Activated naive CD4-positive, alpha-beta T cell treated with anti-CD3 and anti-CD28 coated beads for 36 hours (primary cell): ENCODE measurements at regions of chr21 and their contacts with region 1.

Region 1: DNA sequence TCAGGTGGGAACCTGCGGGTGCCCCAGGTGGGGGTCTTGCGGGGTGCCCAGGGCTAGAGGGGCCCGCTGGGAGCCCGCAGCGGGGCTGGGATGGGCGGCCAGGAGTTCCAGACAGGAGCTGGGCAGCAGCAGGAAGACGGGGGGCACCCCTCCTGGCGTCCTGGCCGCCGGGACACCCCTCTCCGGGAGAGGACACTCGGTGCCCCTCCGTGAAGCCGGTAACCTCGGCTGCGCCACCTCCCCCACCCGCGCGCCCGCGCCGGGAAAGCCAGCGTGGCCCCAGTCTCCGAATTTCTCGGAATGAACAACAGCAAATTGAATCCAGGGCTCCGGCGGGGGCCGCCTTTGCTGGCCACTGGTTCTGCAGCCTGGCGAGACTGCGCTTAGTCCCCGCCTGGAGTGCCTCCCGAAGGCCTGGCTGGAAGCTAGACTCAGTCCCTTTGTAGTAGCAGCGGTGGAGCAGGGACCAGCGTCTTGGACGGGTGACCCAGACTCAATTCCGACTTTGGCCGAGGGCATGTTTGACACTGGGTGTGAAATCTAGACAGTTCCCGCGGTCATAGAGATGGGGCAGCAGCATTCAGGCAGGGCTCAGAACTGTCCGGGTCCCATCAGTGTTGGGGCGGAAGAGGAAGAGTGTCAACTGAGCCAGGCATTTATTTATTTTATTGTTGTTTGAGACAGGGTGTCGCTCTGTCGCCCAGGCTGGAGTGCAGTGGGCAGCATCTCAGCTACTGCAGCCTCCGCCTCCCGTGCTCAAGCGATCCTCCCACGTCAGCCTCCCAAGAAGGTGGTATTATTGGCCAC is 769 bp downstream of the IFNGR2 start:
- DNase-seq: peak; percentile 53
- H3K4me3 Mint-ChIP-seq: peak overlapping the region; percentile 84
- H3K27ac Mint-ChIP-seq: peak overlapping the region; percentile 84
- H3K4me1 Mint-ChIP-seq: peaks cover 38% of the 10 kb centered on the region
- H3K27me3 Mint-ChIP-seq: peaks cover 2% of the 10 kb centered on the region

Region 2: DNA sequence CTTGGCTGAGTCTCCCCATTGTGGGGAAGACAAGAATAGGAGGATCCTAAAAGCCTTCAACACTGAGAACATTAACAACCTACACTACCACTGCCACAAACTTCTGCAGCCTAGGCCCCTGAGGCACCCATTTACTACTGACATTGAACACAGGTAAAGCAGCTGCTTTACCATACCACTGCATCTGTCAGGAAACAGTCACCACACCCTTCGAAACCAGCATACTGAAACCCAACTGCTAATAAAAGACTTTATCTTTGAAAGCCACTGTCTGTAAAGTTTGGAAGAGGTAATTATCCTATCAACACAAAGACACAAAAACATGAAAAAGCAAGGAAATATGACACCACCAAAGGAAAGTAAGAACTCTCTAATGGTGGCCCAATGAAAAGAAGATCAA is 71.8 kb before region 1 on chr21:
- CTCF ChIA-PET with region 1: no interaction called
- intact Hi-C with region 1: no loop called
- DNase-seq: peak; percentile 23
- H3K4me3 Mint-ChIP-seq: no peak overlapping the region
- H3K27ac Mint-ChIP-seq: peak overlapping the region; percentile 32
- H3K4me1 Mint-ChIP-seq: peaks cover 66% of the 10 kb centered on the region
- H3K27me3 Mint-ChIP-seq: no peaks in the 10 kb centered on the region

Region 3: GRCh38 chr21:33374450-33375096 is 29.4 kb before region 1 on chr21:
- CTCF ChIA-PET with region 1: no interaction called
- intact Hi-C with region 1: no loop called
- DNase-seq: peak; percentile 81
- H3K4me3 Mint-ChIP-seq: no peak overlapping the region
- H3K27ac Mint-ChIP-seq: no peak overlapping the region
- H3K4me1 Mint-ChIP-seq: peaks cover 13% of the 10 kb centered on the region
- H3K27me3 Mint-ChIP-seq: no peaks in the 10 kb centered on the region

Region 4: DNA sequence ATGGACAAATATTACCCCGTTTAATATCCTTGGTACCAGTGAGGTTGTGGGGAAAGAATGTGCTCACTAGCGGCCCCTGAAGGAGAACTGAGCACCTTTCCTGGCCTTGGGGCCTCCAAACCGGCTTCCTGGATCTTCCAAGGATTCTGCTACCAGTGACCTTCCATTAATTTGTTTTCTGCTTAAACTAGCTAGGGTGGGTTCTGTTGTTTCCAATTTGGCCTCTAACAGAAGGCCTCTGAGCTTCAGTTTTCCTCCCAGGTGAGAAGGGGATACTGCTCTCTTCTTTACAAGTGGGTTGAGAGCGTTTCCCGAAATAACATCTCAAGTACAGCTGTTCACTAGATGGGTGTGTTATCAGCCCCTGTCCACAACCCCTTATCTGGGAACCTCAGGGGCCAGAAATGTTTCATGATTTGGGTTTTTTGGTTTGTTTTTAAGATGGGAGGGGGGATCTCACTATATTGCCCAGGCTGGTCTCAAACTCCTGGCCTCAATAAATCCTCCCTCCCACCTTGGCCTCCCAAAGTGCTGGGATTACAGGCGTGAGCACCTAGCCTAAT is 17.7 kb before region 1 on chr21:
- CTCF ChIA-PET with region 1: interaction called, 11 read pairs
- intact Hi-C with region 1: loop called (anchors 1 kb)
- DNase-seq: no peak
- H3K4me3 Mint-ChIP-seq: no peak overlapping the region
- H3K27ac Mint-ChIP-seq: no peak overlapping the region
- H3K4me1 Mint-ChIP-seq: peaks cover 43% of the 10 kb centered on the region
- H3K27me3 Mint-ChIP-seq: peaks cover 5% of the 10 kb centered on the region

Region 5: GRCh38 chr21:33434770-33435360 is 30.9 kb after region 1 on chr21:
- CTCF ChIA-PET with region 1: interaction called, 3 read pairs
- intact Hi-C with region 1: loop called (anchors 1 kb)
- DNase-seq: peak; percentile 43
- H3K4me3 Mint-ChIP-seq: peak overlapping the region; percentile 25
- H3K27ac Mint-ChIP-seq: peak overlapping the region; percentile 76
- H3K4me1 Mint-ChIP-seq: peaks cover 29% of the 10 kb centered on the region
- H3K27me3 Mint-ChIP-seq: no peaks in the 10 kb centered on the region

Region 6: GRCh38 chr21:33451634-33452071 is 47.7 kb after region 1 on chr21:
- CTCF ChIA-PET with region 1: no interaction called
- intact Hi-C with region 1: no loop called
- DNase-seq: no peak
- H3K4me3 Mint-ChIP-seq: no peak overlapping the region
- H3K27ac Mint-ChIP-seq: no peak overlapping the region
- H3K4me1 Mint-ChIP-seq: peaks cover 3% of the 10 kb centered on the region
- H3K27me3 Mint-ChIP-seq: no peaks in the 10 kb centered on the region

Region 7: DNA sequence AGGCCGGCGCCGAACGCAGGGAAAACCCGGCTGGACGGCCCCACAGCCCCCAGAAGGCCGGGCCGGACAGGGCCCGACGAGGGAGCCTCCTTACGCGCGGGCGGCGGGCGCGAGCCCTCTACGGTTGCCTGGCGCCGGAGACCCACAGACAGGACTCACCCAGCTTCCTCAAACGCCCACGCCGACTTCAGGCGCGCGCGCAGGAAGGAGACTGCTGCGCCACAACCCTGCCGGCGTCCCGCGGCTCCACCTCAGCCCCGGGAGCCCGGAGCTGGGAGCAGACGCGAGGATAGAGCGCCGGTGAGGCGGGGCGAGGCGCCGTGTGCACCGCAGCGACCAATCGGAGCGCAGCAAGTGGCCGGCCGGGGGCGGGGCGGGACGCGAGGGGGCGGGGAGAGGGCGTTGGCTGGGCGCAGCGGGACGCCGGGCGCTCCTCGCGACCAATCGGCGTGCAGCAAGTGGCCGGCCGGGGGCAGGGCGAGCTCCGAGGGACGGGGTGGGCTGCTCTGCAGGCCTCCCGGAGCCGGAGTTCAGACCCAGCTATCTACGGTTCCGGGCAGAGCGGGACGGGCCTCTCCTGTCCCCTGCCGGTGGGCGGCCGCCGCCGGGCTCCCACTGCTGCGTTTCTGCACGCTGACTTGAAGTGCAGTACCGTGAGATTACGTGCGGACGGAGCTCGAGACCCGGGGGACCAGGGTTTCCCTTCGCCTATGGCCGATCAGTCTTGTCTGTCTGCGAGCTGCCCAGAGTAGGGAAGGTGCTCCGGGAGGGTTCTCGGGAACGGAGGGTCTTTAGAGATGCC is 75.9 kb after region 1 on chr21 and contains the start of gene TMEM50B:
- CTCF ChIA-PET with region 1: no interaction called
- intact Hi-C with region 1: loop called (anchors 2 kb)
- DNase-seq: peak; percentile 96
- H3K4me3 Mint-ChIP-seq: peak within 1 kb of the TSS; percentile 89
- H3K27ac Mint-ChIP-seq: peak within 1 kb of the TSS; percentile 68
- H3K4me1 Mint-ChIP-seq: peaks cover 15% of the 10 kb centered on the region
- H3K27me3 Mint-ChIP-seq: no peaks in the 10 kb centered on the region
- total RNA-seq, gene TMEM50B: 17.8 to 18.2 TPM